Activated CD4-positive, alpha-beta memory T cell treated with anti-CD3 and anti-CD28 coated beads, Interleukin-2, amount 10 ng/mL, durations not matched to agents 7 days and 5 days (primary cell): ENCODE measurements at regions of chr3 and their contacts with region 1.

Region 1: DNA sequence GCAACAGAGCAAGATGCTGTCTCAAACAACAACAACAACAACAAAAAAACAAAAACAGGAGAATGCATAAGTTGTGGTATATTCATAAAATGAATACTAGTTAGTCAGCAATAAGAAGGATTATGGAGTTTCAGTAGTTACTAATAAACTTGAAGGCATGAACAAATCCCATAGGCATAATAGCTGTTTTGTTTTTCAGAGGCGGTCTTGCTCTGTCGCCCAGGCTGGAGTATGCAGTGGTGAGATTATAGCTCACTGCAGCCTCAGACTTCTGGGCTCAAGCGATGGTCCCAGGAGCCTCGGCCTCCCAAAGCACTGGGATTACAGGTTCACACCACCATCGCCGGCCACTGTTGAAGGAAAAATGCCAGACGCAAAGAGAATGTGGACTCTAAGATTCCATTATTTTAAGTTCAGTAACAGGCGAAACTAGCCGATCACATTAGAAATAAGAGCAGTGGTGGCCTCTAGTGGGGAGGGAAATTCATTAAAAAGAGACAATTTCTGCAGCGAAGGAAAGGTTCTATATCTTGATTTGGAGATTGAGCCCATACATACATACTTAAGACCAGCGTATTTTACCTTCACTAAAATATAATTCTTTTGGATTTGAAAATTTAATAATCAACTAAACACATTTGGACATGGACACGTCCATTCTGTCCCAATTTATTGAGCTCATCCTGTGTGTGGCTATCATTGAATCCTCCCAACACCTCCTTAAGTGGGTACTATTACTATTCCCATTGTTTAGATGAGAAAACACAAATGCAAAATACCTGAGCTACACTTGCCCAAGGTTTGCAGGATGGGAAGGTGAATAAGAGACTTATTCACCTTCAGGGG is 27.4 kb upstream of the HDAC11 start:
- DNase-seq: peak; percentile 44
- H3K4me3 Mint-ChIP-seq: peak overlapping the region; percentile 82
- H3K27ac Mint-ChIP-seq: peak overlapping the region; percentile 82
- H3K4me1 Mint-ChIP-seq: peaks cover 22% of the 10 kb centered on the region
- H3K27me3 Mint-ChIP-seq: no peaks in the 10 kb centered on the region

Region 2: DNA sequence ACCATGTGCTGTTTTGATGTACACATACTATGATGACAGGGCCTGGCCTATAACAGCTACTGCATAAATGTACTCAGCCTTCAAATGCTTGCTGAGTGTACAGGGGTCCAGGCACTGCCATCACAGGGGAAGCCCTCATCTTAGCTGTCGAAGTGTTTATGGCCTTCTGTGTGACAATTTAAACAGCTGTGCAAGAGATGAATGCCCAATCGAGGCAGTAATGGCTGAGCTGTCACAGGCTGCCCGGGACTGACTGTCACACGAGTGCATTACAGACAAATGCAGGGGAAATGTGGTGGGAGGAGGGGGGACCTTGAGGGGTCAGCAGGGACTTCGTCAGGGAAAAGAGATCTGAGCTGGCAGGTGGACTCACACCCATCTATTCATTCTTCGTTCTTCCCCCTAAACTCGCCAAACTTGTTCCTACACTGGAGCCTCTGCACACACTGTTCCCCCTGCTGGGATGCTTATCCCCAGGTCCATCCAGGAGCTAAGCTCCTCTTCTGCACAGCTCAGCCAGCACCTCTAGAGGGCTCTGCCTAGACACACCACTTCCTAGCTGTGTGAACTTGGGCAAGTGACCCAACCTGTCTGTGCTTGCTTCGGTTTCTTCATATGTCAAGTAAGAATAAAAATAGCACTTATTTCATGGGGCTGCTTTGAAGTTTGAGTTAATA is 223.3 kb before region 1 on chr3:
- CTCF ChIA-PET with region 1: interaction called, 14 read pairs
- POLR2A ChIA-PET with region 1: interaction called, 6 read pairs
- DNase-seq: peak; percentile 31
- H3K4me3 Mint-ChIP-seq: no peak overlapping the region
- H3K27ac Mint-ChIP-seq: no peak overlapping the region
- H3K4me1 Mint-ChIP-seq: peaks cover 22% of the 10 kb centered on the region
- H3K27me3 Mint-ChIP-seq: peaks cover 15% of the 10 kb centered on the region

Region 3: GRCh38 chr3:13385373-13385965 is 67.2 kb before region 1 on chr3:
- CTCF ChIA-PET with region 1: interaction called, 49 read pairs
- POLR2A ChIA-PET with region 1: no interaction called
- DNase-seq: no peak
- H3K4me3 Mint-ChIP-seq: no peak overlapping the region
- H3K27ac Mint-ChIP-seq: peak overlapping the region; percentile 31
- H3K4me1 Mint-ChIP-seq: peaks cover 4% of the 10 kb centered on the region
- H3K27me3 Mint-ChIP-seq: no peaks in the 10 kb centered on the region

Region 4: GRCh38 chr3:13405614-13406013 is 47.1 kb before region 1 on chr3:
- CTCF ChIA-PET with region 1: interaction called, 11 read pairs
- POLR2A ChIA-PET with region 1: interaction called, 3 read pairs
- DNase-seq: no peak
- H3K4me3 Mint-ChIP-seq: no peak overlapping the region
- H3K27ac Mint-ChIP-seq: no peak overlapping the region
- H3K4me1 Mint-ChIP-seq: peaks cover 17% of the 10 kb centered on the region
- H3K27me3 Mint-ChIP-seq: no peaks in the 10 kb centered on the region

Region 5: GRCh38 chr3:13427662-13428603 is 24.8 kb before region 1 on chr3:
- CTCF ChIA-PET with region 1: interaction called, 35 read pairs
- POLR2A ChIA-PET with region 1: interaction called, 18 read pairs
- DNase-seq: peak; percentile 25
- H3K4me3 Mint-ChIP-seq: peak overlapping the region; percentile 5
- H3K27ac Mint-ChIP-seq: peak overlapping the region; percentile 80
- H3K4me1 Mint-ChIP-seq: peaks cover 36% of the 10 kb centered on the region
- H3K27me3 Mint-ChIP-seq: no peaks in the 10 kb centered on the region

Region 6: DNA sequence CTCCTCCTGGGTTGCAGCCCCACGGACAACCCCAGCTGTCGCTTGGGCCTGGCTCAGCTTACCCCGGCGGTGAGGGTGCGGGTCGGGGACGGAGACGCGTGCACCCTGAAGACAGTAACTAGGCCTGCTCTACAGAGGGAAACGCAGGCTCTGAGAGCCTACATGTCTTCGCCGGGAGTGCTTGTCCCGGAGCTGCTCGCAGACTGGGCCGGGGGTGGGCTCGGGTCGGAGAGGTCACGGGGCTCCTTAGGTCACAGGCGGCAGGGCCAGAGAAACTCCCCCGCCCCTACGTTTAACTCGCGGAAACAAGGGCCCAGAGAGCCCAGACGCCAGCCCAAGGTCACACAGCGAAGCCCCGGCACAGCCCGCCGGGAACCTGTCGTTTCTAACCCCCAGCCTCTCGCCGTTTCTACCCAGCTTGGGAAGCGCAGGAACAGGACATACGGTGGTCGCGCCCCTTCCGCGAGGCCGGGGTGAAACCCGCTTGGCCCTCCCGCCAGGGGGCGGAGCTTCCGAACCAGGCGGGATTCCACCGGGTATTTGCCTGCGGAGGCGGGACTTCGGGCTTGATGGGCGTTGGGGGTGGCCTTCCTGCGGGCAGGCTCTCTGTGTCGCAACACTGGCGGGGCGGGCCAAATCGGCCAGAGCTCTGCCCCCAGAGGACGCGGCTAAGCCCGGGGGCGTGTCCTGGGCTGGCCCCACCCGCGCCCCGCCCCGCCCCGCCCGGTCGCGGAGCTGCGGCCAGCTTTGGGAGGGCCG is 27.0 kb after region 1 on chr3 and contains the start of gene HDAC11:
- CTCF ChIA-PET with region 1: interaction called, 17 read pairs
- POLR2A ChIA-PET with region 1: interaction called, 10 read pairs
- DNase-seq: peak; percentile 98
- H3K4me3 Mint-ChIP-seq: peak within 1 kb of the TSS; percentile 89
- H3K27ac Mint-ChIP-seq: peak within 1 kb of the TSS; percentile 82
- H3K4me1 Mint-ChIP-seq: peaks cover 11% of the 10 kb centered on the region
- H3K27me3 Mint-ChIP-seq: peaks cover 5% of the 10 kb centered on the region
- total RNA-seq, gene HDAC11: 2.0 to 3.6 TPM

Region 7: GRCh38 chr3:13495921-13496723 is 43.4 kb after region 1 on chr3:
- CTCF ChIA-PET with region 1: no interaction called
- POLR2A ChIA-PET with region 1: no interaction called
- DNase-seq: peak; percentile 80
- H3K4me3 Mint-ChIP-seq: no peak overlapping the region
- H3K27ac Mint-ChIP-seq: no peak overlapping the region
- H3K4me1 Mint-ChIP-seq: peaks cover 19% of the 10 kb centered on the region
- H3K27me3 Mint-ChIP-seq: no peaks in the 10 kb centered on the region

Region 8: GRCh38 chr3:13657660-13658435 is 205.1 kb after region 1 on chr3:
- CTCF ChIA-PET with region 1: no interaction called
- POLR2A ChIA-PET with region 1: no interaction called
- DNase-seq: peak; percentile 68
- H3K4me3 Mint-ChIP-seq: no peak overlapping the region
- H3K27ac Mint-ChIP-seq: no peak overlapping the region
- H3K4me1 Mint-ChIP-seq: peaks cover 33% of the 10 kb centered on the region
- H3K27me3 Mint-ChIP-seq: peaks cover 24% of the 10 kb centered on the region